MCF 10A (cell line): ENCODE measurements at regions of chr21 and their contacts with region 1.

Region 1: GRCh38 chr21:37374027-37374426 is 7.5 kb downstream of the DYRK1A start:
- DNase-seq: peak; percentile 47
- H3K4me3 Mint-ChIP-seq: no peak overlapping the region
- H3K27ac Mint-ChIP-seq: peak overlapping the region; percentile 70
- H3K4me1 Mint-ChIP-seq: peaks cover 67% of the 10 kb centered on the region
- H3K27me3 Mint-ChIP-seq: no peaks in the 10 kb centered on the region
- CTCF ChIP-seq: no peak

Region 2: GRCh38 chr21:36976882-36977651 is 397.0 kb before region 1 on chr21:
- CTCF ChIA-PET with region 1: no interaction called
- POLR2A ChIA-PET with region 1: no interaction called
- intact Hi-C with region 1: no loop called
- DNase-seq: peak; percentile 76
- H3K4me3 Mint-ChIP-seq: no peak overlapping the region
- H3K27ac Mint-ChIP-seq: no peak overlapping the region
- H3K4me1 Mint-ChIP-seq: peaks cover 8% of the 10 kb centered on the region
- H3K27me3 Mint-ChIP-seq: no peaks in the 10 kb centered on the region
- CTCF ChIP-seq: peak; percentile 69

Region 3: DNA sequence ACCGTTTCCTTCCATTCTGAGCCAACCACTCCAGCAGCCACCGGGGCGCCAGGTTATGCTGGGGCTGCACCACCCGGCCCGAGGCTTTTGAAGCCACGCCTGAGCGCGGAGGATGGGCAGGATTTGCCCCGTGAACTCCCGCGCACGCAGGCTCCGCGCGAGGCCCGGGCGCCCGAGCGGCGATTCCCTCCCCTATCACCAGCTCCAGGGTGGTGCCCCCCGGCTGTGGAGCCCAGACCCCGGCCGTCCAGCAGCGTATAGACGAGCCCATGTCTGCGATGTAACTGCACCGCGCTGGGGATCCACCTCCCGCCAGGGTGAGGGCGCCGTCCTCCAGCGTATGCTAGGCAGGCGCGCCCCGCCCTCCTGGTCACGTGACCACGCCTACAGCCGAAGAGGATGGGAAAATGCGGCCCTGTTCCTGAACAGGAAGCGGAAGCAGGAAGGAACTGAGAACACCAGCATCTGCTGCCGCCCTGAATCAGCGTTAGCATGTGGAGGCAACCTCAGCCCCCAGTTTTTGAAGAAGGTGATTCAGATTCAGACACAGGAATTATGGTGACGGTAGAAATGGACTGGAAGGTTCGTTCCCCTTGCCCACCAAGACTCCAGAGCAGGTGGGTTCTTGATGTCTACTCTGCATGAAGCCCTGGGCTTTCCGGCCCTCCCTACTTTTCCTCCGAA is 152.9 kb before region 1 on chr21:
- CTCF ChIA-PET with region 1: no interaction called
- POLR2A ChIA-PET with region 1: no interaction called
- intact Hi-C with region 1: no loop called
- DNase-seq: peak; percentile 92
- H3K4me3 Mint-ChIP-seq: peak overlapping the region; percentile 91
- H3K27ac Mint-ChIP-seq: peak overlapping the region; percentile 42
- H3K4me1 Mint-ChIP-seq: peaks cover 10% of the 10 kb centered on the region
- H3K27me3 Mint-ChIP-seq: no peaks in the 10 kb centered on the region
- CTCF ChIP-seq: peak; percentile 27

Region 4: GRCh38 chr21:37407719-37408420 is 33.8 kb after region 1 on chr21:
- CTCF ChIA-PET with region 1: no interaction called
- POLR2A ChIA-PET with region 1: interaction called, 11 read pairs
- intact Hi-C with region 1: no loop called
- DNase-seq: no peak
- H3K4me3 Mint-ChIP-seq: no peak overlapping the region
- H3K27ac Mint-ChIP-seq: peak overlapping the region; percentile 58
- H3K4me1 Mint-ChIP-seq: peaks cover 42% of the 10 kb centered on the region
- H3K27me3 Mint-ChIP-seq: no peaks in the 10 kb centered on the region
- CTCF ChIP-seq: no peak

Region 5: GRCh38 chr21:37536616-37537278 is 162.7 kb after region 1 on chr21:
- CTCF ChIA-PET with region 1: no interaction called
- POLR2A ChIA-PET with region 1: no interaction called
- intact Hi-C with region 1: no loop called
- DNase-seq: no peak
- H3K4me3 Mint-ChIP-seq: no peak overlapping the region
- H3K27ac Mint-ChIP-seq: no peak overlapping the region
- H3K4me1 Mint-ChIP-seq: peaks cover 32% of the 10 kb centered on the region
- H3K27me3 Mint-ChIP-seq: no peaks in the 10 kb centered on the region
- CTCF ChIP-seq: no peak